Activated CD4-positive, alpha-beta memory T cell treated with anti-CD3 and anti-CD28 coated beads for 36 hours (primary cell): ENCODE measurements at regions of chr5 and their contacts with region 1.

Region 1: DNA sequence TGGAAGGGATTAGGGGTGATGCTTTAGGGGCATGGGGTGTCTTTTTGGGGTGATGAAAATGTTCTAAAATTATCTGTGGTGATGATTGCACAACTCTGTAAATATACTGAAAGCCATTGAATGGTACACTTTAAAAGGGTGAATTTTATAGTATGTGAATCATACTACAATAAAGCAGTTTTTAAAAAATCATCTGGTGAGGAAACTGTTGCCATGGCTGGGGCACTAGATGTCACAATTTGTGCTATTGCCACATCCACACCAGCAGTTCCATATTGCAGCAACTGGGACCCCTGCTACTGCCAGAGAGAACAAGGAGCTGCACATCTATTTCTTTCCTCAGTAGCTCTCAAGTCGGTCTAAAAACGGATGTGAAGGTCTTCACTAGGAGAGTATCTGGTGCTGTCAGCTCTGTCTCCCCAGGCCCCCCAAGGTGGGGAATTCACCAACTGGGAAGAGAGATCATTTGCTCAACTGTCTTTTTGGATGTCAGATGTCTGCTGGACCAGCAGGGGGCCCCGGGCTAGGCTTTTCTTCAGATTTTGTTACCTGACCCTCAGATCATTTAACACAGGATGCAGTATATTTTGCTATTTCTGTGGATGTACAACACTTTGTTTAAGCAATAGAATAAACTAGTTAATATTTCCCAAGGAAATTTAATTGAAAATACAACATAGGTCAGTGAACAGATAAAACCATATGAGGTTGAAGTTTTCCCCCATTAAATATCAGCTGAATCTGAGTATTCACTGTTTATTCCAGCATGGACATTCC is 13.2 kb downstream of the CMYA5 start:
- DNase-seq: peak; percentile 48
- H3K4me3 Mint-ChIP-seq: no peak overlapping the region
- H3K27ac Mint-ChIP-seq: no peak overlapping the region
- H3K4me1 Mint-ChIP-seq: peaks cover 13% of the 10 kb centered on the region
- H3K27me3 Mint-ChIP-seq: no peaks in the 10 kb centered on the region

Region 2: DNA sequence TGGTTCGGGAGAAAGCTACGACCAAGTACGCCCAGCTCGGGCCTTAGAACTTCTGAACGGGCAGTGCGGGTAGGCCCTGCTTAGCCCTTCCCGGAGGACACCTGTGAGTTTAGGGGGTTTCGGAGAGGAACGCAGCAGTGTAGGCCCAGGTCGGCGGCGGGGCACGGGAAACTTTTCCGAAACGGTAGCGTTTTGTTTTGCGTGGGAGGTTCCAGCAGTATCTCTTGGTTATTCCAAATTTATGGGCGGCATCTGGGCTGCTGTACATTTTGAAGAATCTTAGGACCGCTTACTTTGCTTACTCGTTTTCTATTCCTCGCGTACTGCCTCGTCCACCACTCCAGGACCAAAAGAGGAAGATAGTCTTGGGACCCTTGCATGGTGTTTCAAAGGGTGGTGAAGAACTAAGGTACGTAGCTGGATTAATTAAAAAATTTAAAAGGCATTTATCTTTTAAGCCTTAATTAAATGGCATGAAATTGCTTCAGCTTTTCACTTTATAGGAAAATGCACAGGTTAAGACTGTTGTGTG is 90.1 kb before region 1 on chr5:
- CTCF ChIA-PET with region 1: no interaction called
- POLR2A ChIA-PET with region 1: no interaction called
- intact Hi-C with region 1: loop called (anchors 1 kb)
- DNase-seq: no peak
- H3K4me3 Mint-ChIP-seq: peak overlapping the region; percentile 98
- H3K27ac Mint-ChIP-seq: peak overlapping the region; percentile 95
- H3K4me1 Mint-ChIP-seq: peaks cover 31% of the 10 kb centered on the region
- H3K27me3 Mint-ChIP-seq: no peaks in the 10 kb centered on the region

Region 3: GRCh38 chr5:79857714-79858409 is 155.1 kb after region 1 on chr5:
- CTCF ChIA-PET with region 1: interaction called, 15 read pairs
- POLR2A ChIA-PET with region 1: no interaction called
- intact Hi-C with region 1: loop called (anchors 1 kb)
- DNase-seq: peak; percentile 87
- H3K4me3 Mint-ChIP-seq: no peak overlapping the region
- H3K27ac Mint-ChIP-seq: no peak overlapping the region
- H3K4me1 Mint-ChIP-seq: peaks cover 3% of the 10 kb centered on the region
- H3K27me3 Mint-ChIP-seq: peaks cover 3% of the 10 kb centered on the region